Common myeloid progenitor, CD34-positive (primary cell): ENCODE measurements at regions of chr3 and their contacts with region 1.

Region 1: GRCh38 chr3:39126532-39127071 is 19.1 kb downstream of the TTC21A start:
- DNase-seq: peak; percentile 60 to 65 (median 64)
- H3K4me3 ChIP-seq: no peak overlapping the region
- H3K27ac ChIP-seq: no peak overlapping the region
- H3K4me1 ChIP-seq: peaks cover 13 to 40% (median 33%) of the 10 kb centered on the region in 4 experiments
- H3K27me3 ChIP-seq: no peaks in the 10 kb centered on the region

Region 2: DNA sequence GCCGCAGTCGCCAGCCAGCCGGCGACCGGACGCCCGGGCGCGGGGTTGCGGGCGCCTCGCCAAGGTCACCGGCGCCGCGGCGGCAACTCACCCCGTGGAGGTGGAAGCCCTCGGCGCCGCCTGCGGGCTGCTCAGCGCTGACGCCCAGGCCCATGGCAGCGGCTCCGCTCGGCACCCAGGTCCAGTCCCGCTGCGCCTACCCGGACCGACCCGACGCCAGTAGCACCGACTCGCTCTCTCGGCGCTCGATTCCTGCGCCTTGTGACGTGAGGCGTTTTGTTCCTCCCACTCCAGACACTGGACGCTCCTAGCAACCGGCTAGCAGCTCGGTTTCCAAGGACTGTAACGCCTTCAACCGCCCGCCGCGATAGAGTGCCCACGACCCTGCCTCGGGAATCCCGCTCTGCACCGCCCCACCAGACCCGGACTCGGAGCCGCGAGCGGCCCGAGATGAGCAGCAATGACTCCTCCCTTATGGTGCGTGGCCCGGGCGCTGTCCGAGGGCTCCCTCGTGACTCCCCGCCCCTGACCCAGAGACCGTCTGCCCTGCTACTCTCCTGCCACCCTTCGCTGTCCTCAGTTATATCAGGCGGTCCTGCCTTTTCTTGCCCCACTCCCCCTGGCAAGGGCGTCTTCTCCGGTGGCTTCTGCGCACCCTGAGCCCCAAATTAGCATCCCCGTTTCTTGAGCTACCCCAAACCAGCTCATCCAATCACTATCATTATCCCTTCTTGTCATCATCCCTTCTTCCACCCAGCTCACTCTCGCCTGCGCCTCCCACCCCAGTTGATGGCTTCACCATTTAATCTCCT is 19.0 kb before region 1 on chr3 and contains the starts of genes GORASP1 and TTC21A:
- CTCF ChIA-PET with region 1: interaction called, 33 read pairs
- POLR2A ChIA-PET with region 1: interaction called, 3 read pairs
- DNase-seq: peak; percentile 80 to 89 (median 85)
- H3K4me3 ChIP-seq: peak within 1 kb of the TSS; percentile 73 to 94 (median 85)
- H3K27ac ChIP-seq: peak within 1 kb of the TSS; percentile 37 to 71
- H3K4me1 ChIP-seq: peaks cover 2 to 35% (median 25%) of the 10 kb centered on the region in 4 experiments
- H3K27me3 ChIP-seq: no peaks in the 10 kb centered on the region

Region 3: DNA sequence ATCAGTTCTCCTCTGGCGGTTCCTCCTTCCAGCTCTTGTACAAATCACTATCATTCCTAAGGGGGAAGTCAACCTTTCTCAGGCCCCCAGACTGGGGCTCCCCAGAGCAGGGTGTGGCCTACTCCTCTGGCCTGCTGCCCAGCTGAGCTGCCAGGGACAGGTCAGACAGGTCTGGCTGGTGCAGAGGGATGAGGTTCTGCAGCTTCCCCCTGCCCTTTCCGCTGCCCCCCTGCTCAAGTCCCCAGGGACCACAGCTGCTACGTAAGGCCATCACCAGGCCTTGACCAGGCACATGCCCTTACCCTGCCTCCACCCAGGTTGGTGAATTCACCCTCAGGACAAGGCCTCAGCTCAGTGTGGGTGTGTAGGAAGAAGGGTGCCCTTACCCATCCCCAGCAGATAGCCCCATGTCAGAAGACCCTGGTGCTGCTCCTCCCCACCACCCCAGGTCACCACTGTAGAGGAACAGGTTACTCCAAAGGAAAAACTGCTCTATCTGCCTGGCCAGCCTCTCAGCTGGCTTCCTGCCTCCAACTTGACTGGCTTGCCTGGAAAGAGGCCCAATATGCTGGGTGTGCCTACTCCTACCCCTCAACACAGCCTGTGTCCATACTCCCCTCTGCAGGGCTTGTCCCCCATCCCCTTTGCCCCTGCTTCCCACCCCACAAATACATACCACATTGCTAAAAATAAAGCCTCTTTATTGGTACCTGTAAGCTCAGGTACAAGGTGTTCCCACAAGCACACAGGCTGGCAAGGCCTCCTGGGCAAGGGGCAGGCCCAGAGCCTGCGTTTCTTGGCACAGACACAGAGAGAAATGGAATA is 14.8 kb after region 1 on chr3:
- CTCF ChIA-PET with region 1: interaction called, 54 read pairs
- POLR2A ChIA-PET with region 1: interaction called, 5 read pairs
- DNase-seq: peak in 2 of 3 donors; percentile 34 to 42
- H3K4me3 ChIP-seq: peak overlapping the region in 2 of 7 experiments; percentile 6 to 16
- H3K27ac ChIP-seq: peak overlapping the region in 1 of 2 experiments; percentile 34
- H3K4me1 ChIP-seq: peaks cover 1 to 41% (median 34%) of the 10 kb centered on the region in 4 experiments
- H3K27me3 ChIP-seq: no peaks in the 10 kb centered on the region

Region 4: GRCh38 chr3:39146984-39147591 is 20.5 kb after region 1 on chr3:
- CTCF ChIA-PET with region 1: interaction called, 54 read pairs
- POLR2A ChIA-PET with region 1: interaction called, 14 read pairs
- DNase-seq: peak; percentile 83 to 97 (median 94)
- H3K4me3 ChIP-seq: peak overlapping the region in 6 of 7 experiments; percentile 45 to 72 (median 53)
- H3K27ac ChIP-seq: peak overlapping the region; percentile 95 to 96
- H3K4me1 ChIP-seq: peaks cover 25 to 80% (median 73%) of the 10 kb centered on the region in 4 experiments
- H3K27me3 ChIP-seq: no peaks in the 10 kb centered on the region

Region 5: DNA sequence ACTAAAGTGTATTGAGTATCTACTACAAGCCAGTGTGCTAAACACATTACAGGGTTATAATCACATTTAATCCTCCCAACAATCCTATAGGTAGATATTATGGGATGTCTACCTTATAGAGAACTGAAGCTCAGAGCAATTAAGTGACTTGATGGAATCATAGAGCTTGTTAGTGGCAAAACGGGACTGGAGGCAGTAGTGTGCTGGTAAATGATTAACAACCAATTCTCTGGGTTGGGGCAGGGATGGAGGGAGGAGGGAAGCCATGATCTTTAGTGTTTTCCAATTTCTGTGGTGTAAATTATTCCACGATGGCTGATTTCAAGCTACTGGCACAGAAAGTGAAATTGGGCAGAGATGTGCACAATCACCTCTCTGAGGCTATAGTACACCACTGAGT is 45.3 kb after region 1 on chr3:
- CTCF ChIA-PET with region 1: interaction called, 15 read pairs
- POLR2A ChIA-PET with region 1: no interaction called
- DNase-seq: no peak
- H3K4me3 ChIP-seq: no peak overlapping the region
- H3K27ac ChIP-seq: no peak overlapping the region
- H3K4me1 ChIP-seq: peaks cover 0 to 5% (median under 1%) of the 10 kb centered on the region in 4 experiments
- H3K27me3 ChIP-seq: no peaks in the 10 kb centered on the region

Region 6: DNA sequence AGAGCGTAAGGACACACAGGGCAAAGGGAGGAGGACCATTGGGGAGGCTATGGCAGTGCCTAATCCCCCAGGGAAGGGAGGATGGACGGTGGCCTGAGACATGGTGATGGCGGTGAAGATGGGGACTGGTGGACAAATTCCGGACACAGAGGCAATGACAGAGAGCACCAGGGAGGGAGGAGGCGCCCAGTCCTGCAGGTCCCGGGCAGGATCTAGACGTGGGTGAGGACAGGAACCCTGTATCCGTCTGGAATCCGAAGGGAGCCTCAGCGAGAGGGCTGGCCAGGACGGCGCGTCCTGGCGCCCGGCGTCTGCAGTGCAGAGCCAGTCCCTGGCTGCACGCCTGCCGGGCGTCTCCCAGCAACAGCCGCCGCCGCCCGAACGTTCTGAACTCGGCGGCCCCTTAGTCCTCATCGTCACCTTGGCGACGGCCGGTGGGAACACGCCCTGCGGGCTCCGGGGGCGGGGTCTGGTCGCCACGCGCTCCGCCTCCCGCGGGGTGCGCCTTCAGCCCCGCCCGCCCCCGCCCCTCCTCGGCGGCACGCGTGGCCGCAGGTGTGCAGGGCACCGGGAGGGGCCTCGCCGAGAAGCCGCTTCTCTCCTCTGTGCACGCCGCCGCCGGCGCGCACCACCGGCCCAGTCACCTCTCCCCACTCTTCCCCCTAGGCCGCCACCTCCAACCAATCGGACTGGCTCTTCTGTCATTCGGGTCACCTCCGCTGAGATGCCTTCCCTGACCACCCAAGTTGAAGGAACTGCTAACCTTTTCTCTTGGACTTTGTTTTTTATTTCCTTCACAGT is 54.1 kb after region 1 on chr3:
- CTCF ChIA-PET with region 1: interaction called, 90 read pairs
- POLR2A ChIA-PET with region 1: no interaction called
- DNase-seq: peak; percentile 83 to 92 (median 91)
- H3K4me3 ChIP-seq: peak overlapping the region; percentile 17 to 78 (median 62)
- H3K27ac ChIP-seq: no peak overlapping the region
- H3K4me1 ChIP-seq: peaks cover 18 to 38% (median 32%) of the 10 kb centered on the region in 4 experiments
- H3K27me3 ChIP-seq: no peaks in the 10 kb centered on the region